MCF 10A (cell line): ENCODE measurements at regions of chr2 and their contacts with region 1.

Region 1: GRCh38 chr2:31413862-31414550 is 536 bp downstream of the XDH start:
- DNase-seq: peak; percentile 54
- H3K4me3 Mint-ChIP-seq: peak overlapping the region; percentile 61
- H3K27ac Mint-ChIP-seq: no peak overlapping the region
- H3K4me1 Mint-ChIP-seq: peaks cover 46% of the 10 kb centered on the region
- H3K27me3 Mint-ChIP-seq: no peaks in the 10 kb centered on the region
- CTCF ChIP-seq: peak; percentile 39

Region 2: DNA sequence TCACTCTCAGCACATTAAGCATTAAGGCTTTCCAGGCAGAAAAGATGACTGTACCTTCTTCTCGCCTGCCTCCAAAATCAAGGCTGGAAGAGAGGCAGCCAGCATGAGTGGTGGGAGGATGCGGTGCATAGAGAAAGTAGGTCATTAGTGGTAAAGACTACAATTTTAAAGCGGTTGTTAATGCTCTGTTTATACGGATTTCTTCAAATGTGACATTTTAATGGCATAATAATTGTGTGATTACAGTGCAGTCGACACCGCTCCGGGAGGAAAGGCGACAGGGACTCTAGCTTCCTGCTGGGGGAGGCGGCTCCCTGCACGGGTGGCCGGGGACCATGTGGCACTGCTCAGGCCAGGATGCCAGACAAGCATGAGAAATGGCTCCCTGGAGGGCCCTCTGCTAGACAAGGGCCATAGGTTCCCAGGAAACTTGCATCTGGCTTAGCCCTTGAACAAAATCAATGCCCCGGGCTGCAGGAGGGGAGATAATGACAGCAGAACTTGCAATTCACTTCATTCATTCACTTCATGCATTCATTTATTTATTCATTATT is 405.4 kb before region 1 on chr2:
- CTCF ChIA-PET with region 1: no interaction called
- POLR2A ChIA-PET with region 1: no interaction called
- intact Hi-C with region 1: no loop called
- DNase-seq: no peak
- H3K4me3 Mint-ChIP-seq: no peak overlapping the region
- H3K27ac Mint-ChIP-seq: no peak overlapping the region
- H3K4me1 Mint-ChIP-seq: no peaks in the 10 kb centered on the region
- H3K27me3 Mint-ChIP-seq: no peaks in the 10 kb centered on the region
- CTCF ChIP-seq: no peak

Region 3: GRCh38 chr2:31322371-31322770 is 91.6 kb before region 1 on chr2:
- CTCF ChIA-PET with region 1: no interaction called
- POLR2A ChIA-PET with region 1: no interaction called
- intact Hi-C with region 1: no loop called
- DNase-seq: no peak
- H3K4me3 Mint-ChIP-seq: no peak overlapping the region
- H3K27ac Mint-ChIP-seq: no peak overlapping the region
- H3K4me1 Mint-ChIP-seq: peaks cover 24% of the 10 kb centered on the region
- H3K27me3 Mint-ChIP-seq: no peaks in the 10 kb centered on the region
- CTCF ChIP-seq: no peak

Region 4: DNA sequence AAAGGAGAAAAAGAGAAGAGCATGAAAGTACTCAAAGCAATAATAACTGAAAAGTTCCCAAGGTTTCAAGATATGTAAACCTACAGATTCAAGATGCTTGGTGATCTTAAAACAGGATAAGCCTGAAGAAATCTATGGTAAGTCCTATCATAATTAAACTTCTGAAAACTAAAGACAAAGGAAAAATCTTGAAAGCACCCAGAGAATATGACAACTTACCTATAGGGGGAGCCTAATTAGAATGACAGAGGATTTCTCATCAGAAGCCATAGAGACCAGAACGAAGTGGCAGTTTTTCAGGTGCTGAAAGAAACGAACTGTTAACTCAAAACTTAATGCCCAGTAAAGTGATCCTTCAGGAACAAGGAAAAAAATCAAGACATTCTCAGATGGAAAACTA is 59.2 kb before region 1 on chr2:
- CTCF ChIA-PET with region 1: interaction called, 6 read pairs
- POLR2A ChIA-PET with region 1: no interaction called
- intact Hi-C with region 1: loop called (anchors 2 kb)
- DNase-seq: peak; percentile 52
- H3K4me3 Mint-ChIP-seq: peak overlapping the region; percentile 50
- H3K27ac Mint-ChIP-seq: peak overlapping the region; percentile 87
- H3K4me1 Mint-ChIP-seq: peaks cover 7% of the 10 kb centered on the region
- H3K27me3 Mint-ChIP-seq: no peaks in the 10 kb centered on the region
- CTCF ChIP-seq: peak; percentile 44

Region 5: GRCh38 chr2:31390324-31390723 is 23.7 kb before region 1 on chr2:
- CTCF ChIA-PET with region 1: interaction called, 5 read pairs
- POLR2A ChIA-PET with region 1: interaction called, 36 read pairs
- intact Hi-C with region 1: no loop called
- DNase-seq: peak; percentile 94
- H3K4me3 Mint-ChIP-seq: peak overlapping the region; percentile 4
- H3K27ac Mint-ChIP-seq: peak overlapping the region; percentile 82
- H3K4me1 Mint-ChIP-seq: peaks cover 32% of the 10 kb centered on the region
- H3K27me3 Mint-ChIP-seq: no peaks in the 10 kb centered on the region
- CTCF ChIP-seq: no peak

Region 6: DNA sequence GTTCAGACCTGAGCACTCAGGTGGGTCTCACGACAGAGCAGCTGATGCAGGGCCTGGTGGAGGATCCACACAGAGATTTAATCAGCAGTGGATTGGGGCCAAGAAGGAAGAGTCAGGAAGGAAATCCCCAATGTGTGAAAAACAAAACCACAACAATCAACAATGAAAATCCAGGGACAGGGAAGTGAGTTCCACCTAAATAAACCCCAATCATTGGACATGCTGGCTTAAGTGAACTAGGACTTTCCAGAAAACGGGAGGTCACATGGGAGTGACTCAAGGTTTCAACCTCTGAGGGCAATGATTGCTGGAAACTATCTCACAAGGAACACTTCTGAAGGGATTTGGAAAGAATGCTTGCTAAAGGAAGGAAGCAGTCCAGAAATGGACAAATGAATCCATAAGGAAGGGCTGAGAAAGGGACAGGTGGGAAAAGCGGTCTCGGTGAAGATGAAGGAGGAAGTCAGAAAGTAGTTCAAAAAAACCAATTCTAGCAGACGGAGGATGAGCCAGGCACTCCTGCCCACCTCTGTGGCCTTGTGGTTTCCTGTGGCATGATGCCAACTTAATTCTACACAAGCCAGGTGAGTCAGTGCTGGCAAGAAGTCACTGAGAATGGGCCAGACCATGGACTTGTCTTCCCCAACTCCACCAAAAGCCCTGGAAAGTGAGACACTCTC is 15.9 kb after region 1 on chr2:
- CTCF ChIA-PET with region 1: interaction called, 18 read pairs
- POLR2A ChIA-PET with region 1: interaction called, 20 read pairs
- intact Hi-C with region 1: no loop called
- DNase-seq: peak; percentile 95
- H3K4me3 Mint-ChIP-seq: peak overlapping the region; percentile 4
- H3K27ac Mint-ChIP-seq: peak overlapping the region; percentile 49
- H3K4me1 Mint-ChIP-seq: peaks cover 19% of the 10 kb centered on the region
- H3K27me3 Mint-ChIP-seq: no peaks in the 10 kb centered on the region
- CTCF ChIP-seq: no peak

Region 7: DNA sequence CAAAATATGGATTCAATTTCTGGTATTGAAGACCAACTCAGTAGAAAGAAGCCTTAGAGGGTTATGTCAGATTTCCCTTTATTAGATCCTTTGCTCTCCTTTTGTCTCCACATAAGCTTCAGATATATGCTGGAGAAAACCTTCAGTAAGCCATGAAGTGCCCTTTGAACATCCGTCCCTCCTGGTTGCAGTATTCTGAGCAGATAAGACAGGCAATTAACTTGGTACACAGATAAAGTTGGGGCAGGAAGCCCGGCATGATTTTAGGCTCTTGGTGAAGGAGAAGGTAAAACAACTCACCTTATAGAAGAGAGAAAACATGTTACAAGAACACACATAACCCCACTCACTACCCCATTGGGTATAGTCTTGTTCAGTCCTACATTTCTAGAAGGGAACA is 90.3 kb after region 1 on chr2:
- CTCF ChIA-PET with region 1: no interaction called
- POLR2A ChIA-PET with region 1: no interaction called
- intact Hi-C with region 1: no loop called
- DNase-seq: no peak
- H3K4me3 Mint-ChIP-seq: no peak overlapping the region
- H3K27ac Mint-ChIP-seq: no peak overlapping the region
- H3K4me1 Mint-ChIP-seq: no peaks in the 10 kb centered on the region
- H3K27me3 Mint-ChIP-seq: no peaks in the 10 kb centered on the region
- CTCF ChIP-seq: no peak

Region 8: DNA sequence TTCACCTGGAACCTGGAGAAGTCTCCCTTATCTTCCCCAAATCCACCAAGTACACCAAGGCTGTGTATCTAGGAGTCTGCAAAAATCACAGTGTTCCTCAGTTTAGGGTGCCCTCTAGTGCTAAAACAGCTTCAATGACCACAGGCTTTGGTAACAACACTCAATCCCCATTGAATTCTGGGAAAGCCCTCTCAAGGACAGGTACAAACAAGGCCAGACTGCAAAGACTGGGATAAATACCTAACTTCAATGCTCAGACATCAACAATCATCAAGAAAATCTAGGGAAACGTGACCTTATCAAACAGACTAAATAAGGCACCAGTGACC is 315.7 kb after region 1 on chr2:
- CTCF ChIA-PET with region 1: interaction called, 4 read pairs
- POLR2A ChIA-PET with region 1: interaction called, 3 read pairs
- intact Hi-C with region 1: loop called (anchors 1 kb)
- DNase-seq: peak; percentile 68
- H3K4me3 Mint-ChIP-seq: no peak overlapping the region
- H3K27ac Mint-ChIP-seq: no peak overlapping the region
- H3K4me1 Mint-ChIP-seq: no peaks in the 10 kb centered on the region
- H3K27me3 Mint-ChIP-seq: no peaks in the 10 kb centered on the region
- CTCF ChIP-seq: peak; percentile 65

Region 9: DNA sequence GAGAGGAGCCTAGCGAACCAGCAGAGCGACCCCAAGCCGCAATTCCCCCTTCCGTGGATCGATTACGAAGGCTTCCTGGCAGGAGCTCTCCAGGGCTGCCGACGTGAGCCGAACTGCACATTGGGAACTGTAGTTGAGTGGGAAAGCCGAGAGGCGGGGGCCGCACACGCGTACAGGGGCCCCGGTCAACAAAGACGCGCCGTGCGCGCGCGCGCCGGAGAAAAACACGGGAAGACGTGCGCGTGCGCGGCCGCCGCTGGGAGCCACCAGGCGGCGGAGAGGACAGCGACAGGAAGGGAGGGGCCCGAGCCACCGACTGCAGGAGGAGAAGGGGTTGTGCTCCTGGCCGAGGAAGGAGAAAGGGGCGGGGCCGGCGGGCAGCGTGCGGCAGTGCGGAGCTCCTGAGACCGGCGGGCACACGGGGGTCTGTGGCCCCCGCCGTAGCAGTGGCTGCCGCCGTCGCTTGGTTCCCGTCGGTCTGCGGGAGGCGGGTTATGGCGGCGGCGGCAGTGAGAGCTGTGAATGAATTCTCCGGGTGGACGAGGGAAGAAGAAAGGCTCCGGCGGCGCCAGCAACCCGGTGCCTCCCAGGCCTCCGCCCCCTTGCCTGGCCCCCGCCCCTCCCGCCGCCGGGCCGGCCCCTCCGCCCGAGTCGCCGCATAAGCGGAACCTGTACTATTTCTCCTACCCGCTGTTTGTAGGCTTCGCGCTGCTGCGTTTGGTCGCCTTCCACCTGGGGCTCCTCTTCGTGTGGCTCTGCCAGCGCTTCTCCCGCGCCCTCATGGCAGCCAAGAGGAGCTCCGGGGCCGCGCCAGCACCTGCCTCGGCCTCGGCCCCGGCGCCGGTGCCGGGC is 649.5 kb after region 1 on chr2 and contains the start of gene SPAST:
- CTCF ChIA-PET with region 1: no interaction called
- POLR2A ChIA-PET with region 1: no interaction called
- intact Hi-C with region 1: loop called (anchors 5 kb)
- DNase-seq: peak; percentile 97
- H3K4me3 Mint-ChIP-seq: peak within 1 kb of the TSS; percentile 98
- H3K27ac Mint-ChIP-seq: peak within 1 kb of the TSS; percentile 94
- H3K4me1 Mint-ChIP-seq: peaks cover 16% of the 10 kb centered on the region
- H3K27me3 Mint-ChIP-seq: no peaks in the 10 kb centered on the region
- CTCF ChIP-seq: peak; percentile 18
- total RNA-seq, gene SPAST: 20.4 and 23.8 TPM in 2 replicates